Cardiac septum (tissue), 1 donor: ENCODE measurements at regions of chr10 and their contacts with region 1.

Region 1: GRCh38 chr10:25498651-25499050 is 323.9 kb downstream of the GPR158 start:
- DNase-seq: no peak

Region 2: GRCh38 chr10:25441270-25441669 is 57.4 kb before region 1 on chr10:
- intact Hi-C with region 1: loop called (anchors 5 kb)
- DNase-seq: no peak